PC-9 (cell line): ENCODE measurements at regions of chr5 and their contacts with region 1.

Region 1: GRCh38 chr5:113038714-113039113 is 62.1 kb downstream of the DCP2 start:
- DNase-seq: peak in 1 of 2 experiments; percentile 43
- H3K4me3 ChIP-seq: no peak overlapping the region
- H3K27ac ChIP-seq: no peak overlapping the region
- H3K4me1 ChIP-seq: no peaks in the 10 kb centered on the region
- H3K27me3 ChIP-seq: no peaks in the 10 kb centered on the region
- CTCF ChIP-seq: no peak

Region 2: DNA sequence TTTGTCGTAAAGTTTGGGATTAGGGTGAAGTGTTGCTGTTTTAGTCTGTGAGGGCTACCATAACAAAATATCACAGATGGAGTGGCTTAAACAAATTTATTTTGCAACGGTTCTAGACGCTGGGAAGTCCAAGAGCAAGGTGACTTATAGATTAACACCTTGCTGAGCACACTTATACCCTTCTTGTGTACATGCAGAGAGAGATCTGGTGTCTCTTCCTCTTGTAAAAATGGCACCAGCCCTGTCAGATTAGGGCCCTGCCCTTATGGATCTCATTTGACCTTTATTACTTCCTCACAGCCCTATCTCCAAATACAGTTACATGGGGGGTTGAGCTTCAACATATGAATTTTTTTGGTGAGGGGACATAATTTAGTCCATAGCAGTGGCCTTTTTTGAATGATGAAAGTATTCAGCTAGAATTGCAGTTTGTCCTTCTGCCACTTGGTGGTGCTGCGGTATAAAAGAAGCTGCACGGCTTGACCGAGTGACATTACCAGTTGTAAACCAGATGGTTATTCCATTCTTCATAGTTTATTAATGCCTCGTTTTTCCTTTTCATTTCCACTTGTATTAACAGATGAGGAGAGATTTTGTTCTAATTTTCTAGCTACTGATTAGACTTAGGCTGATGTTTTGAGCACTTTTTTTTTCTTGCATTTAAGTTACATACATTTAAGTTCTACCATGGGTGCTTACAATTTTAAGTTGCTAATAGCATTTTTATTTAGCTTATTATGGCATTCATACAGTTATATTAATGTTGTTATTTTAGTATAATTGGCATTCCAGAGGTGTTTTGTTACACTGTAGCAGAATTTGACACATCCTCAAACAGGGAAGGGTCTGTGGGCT is 42.7 kb before region 1 on chr5:
- CTCF ChIA-PET with region 1: no interaction called
- POLR2A ChIA-PET with region 1: no interaction called
- intact Hi-C with region 1: loop called (anchors 2 kb)
- DNase-seq: peak; percentile 39 to 60
- H3K4me3 ChIP-seq: no peak overlapping the region
- H3K27ac ChIP-seq: no peak overlapping the region
- H3K4me1 ChIP-seq: no peaks in the 10 kb centered on the region
- H3K27me3 ChIP-seq: no peaks in the 10 kb centered on the region
- CTCF ChIP-seq: peak; percentile 96

Region 3: GRCh38 chr5:113166852-113167366 is 128.2 kb after region 1 on chr5:
- CTCF ChIA-PET with region 1: no interaction called
- POLR2A ChIA-PET with region 1: no interaction called
- intact Hi-C with region 1: no loop called
- DNase-seq: peak; percentile 57 to 83
- H3K4me3 ChIP-seq: no peak overlapping the region; the same call in 1 of the 2 replicates
- H3K27ac ChIP-seq: peak overlapping the region; percentile 61
- H3K4me1 ChIP-seq: peaks cover 38% of the 10 kb centered on the region
- H3K27me3 ChIP-seq: no peaks in the 10 kb centered on the region
- CTCF ChIP-seq: no peak